ENCODE measurements at regions of chr11 and their contacts with region 1.

Region 1: GRCh38 chr11:66438504-66439466 is at the start of gene MRPL11:
- DNase-seq: peak; percentile 87
- ATAC-seq: peak; percentile 95
- H3K4me3 Mint-ChIP-seq: peak within 1 kb of the TSS; percentile 90
- H3K27ac Mint-ChIP-seq: peak within 1 kb of the TSS; percentile 97
- H3K4me1 Mint-ChIP-seq: peaks cover 17% of the 10 kb centered on the region
- H3K27me3 Mint-ChIP-seq: no peaks in the 10 kb centered on the region
- total RNA-seq, gene MRPL11: 53.9 to 64.4 TPM

Region 2: GRCh38 chr11:66207876-66208275 is 230.9 kb before region 1 on chr11:
- POLR2A ChIA-PET with region 1: no interaction called
- DNase-seq: no peak
- ATAC-seq: no peak
- H3K4me3 Mint-ChIP-seq: no peak overlapping the region
- H3K27ac Mint-ChIP-seq: no peak overlapping the region
- H3K4me1 Mint-ChIP-seq: peaks cover 7% of the 10 kb centered on the region
- H3K27me3 Mint-ChIP-seq: no peaks in the 10 kb centered on the region

Region 3: DNA sequence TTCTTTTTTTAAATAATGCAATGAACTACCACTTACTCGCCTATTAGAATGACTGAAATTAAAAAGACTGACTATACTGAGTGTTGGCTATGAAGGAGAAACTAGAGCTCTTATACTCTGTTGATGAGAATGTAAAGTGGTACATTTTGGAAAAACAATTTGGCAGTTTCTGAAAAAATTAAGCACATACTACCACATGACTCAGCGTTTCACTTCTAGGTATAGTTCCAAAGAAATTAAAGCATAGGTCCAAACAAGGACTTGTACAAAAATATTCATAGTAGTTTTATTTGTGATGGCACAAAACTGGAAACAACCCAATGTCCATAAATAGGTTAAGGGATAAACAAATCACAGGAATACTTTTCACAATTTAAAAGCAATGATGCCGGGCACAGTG is 44.8 kb before region 1 on chr11:
- POLR2A ChIA-PET with region 1: no interaction called
- DNase-seq: no peak
- ATAC-seq: no peak
- H3K4me3 Mint-ChIP-seq: no peak overlapping the region
- H3K27ac Mint-ChIP-seq: no peak overlapping the region
- H3K4me1 Mint-ChIP-seq: peaks cover 2% of the 10 kb centered on the region
- H3K27me3 Mint-ChIP-seq: peaks cover 18% of the 10 kb centered on the region

Region 4: DNA sequence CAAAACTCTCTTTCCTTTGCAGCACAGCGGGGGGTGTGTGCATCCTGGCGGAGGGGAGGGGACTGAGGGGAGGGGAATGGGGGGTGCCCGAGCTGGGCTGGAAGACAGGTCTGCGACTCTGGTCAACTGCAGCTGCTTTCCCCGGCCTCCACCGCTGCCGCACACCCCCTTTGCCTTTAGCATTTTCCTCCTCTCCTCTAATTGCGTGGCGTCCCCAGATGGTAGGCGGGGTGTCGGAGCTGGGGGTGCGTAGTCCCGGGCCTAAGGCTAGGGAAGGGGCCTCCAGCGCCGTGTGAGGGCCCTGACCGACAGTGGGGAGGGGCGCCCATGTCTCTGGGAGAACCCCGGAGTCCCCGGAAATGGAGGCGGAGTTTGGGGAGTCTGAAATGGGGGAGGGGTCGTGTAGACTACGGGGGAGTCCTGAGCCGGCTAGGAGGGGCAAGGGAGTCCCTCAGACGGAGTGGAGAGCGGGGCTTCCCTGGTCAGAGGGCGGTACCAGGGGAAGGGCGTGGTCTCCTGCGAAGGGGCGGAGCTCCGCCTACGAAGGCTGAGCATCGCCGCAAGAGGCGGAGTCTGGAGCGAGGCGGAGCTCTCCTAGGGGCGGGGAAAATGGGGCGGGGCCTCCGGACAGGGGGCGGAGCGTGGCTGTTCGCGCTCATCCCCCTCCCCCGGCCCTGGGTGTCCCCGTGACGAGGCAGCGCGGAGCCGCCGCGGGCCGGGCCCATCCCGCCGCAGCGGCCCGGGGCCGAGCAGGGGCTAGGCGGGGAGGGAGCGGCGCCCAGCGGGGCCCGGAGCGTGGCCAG is 27.6 kb after region 1 on chr11 and contains the start of gene PELI3:
- POLR2A ChIA-PET with region 1: interaction called, 11 read pairs
- DNase-seq: peak; percentile 94
- ATAC-seq: peak; percentile 80
- H3K4me3 Mint-ChIP-seq: peak within 1 kb of the TSS; percentile 92
- H3K27ac Mint-ChIP-seq: peak within 1 kb of the TSS; percentile 71
- H3K4me1 Mint-ChIP-seq: peaks cover 31% of the 10 kb centered on the region
- H3K27me3 Mint-ChIP-seq: peaks cover 3% of the 10 kb centered on the region
- total RNA-seq, gene PELI3: 10.6 to 10.7 TPM

Region 5: GRCh38 chr11:66480117-66480938 is 41.5 kb after region 1 on chr11 and contains the start of gene DPP3:
- POLR2A ChIA-PET with region 1: interaction called, 13 read pairs
- DNase-seq: peak; percentile 96
- ATAC-seq: peak; percentile 97
- H3K4me3 Mint-ChIP-seq: peak within 1 kb of the TSS; percentile 94
- H3K27ac Mint-ChIP-seq: peak within 1 kb of the TSS; percentile 88
- H3K4me1 Mint-ChIP-seq: peaks cover 20% of the 10 kb centered on the region
- H3K27me3 Mint-ChIP-seq: no peaks in the 10 kb centered on the region
- total RNA-seq, gene DPP3: 44.9 to 45.7 TPM

Region 6: GRCh38 chr11:66559142-66559865 is 120.5 kb after region 1 on chr11:
- POLR2A ChIA-PET with region 1: no interaction called
- DNase-seq: no peak
- ATAC-seq: peak; percentile 62
- H3K4me3 Mint-ChIP-seq: no peak overlapping the region
- H3K27ac Mint-ChIP-seq: no peak overlapping the region
- H3K4me1 Mint-ChIP-seq: no peaks in the 10 kb centered on the region
- H3K27me3 Mint-ChIP-seq: peaks cover 13% of the 10 kb centered on the region